GM10248 (cell line): ENCODE measurements at regions of chr18 and their contacts with region 1.

Region 1: DNA sequence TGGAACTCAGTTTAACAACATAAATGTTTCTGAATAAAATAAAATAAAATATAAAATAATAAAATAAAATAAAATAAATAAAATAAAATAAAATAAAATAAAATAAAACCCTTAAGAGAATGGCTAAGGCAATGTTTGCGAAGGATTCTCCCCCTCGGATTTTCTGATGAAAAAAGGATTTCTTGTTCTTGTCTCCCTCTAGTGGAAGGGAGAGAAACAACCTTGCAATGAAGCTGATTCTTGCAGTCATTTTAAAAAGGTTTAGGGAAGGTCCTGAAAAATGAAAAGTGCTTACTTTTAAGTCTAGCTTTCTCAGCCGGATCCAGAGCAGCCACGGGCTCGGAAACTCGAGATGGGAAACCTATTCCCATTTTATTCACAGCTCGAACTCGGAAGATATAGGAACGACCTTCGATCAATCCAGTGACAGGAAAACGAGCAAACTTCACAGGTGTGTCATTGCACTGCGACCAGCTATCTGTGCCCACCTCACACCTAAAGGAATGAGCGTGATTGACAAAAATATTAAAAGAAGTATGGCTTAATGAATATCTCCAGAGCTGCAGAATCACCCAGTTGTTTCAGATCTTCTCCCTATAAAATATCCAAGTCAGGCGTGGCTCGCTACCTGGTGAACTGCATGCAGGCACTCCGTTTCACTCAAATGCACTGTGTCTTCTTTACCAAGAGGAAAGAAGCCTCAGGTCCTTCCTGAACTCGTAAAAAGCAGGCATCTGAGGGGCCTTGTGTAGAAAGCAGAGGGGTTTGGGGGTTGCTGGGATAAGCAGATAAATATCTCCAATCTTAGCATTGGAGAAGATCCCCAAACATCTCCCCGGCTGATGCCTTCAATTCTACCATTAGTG is 68.1 kb downstream of the MYOM1 start:
- DNase-seq: peak; percentile 65
- CTCF ChIP-seq: peak; percentile 71

Region 2: DNA sequence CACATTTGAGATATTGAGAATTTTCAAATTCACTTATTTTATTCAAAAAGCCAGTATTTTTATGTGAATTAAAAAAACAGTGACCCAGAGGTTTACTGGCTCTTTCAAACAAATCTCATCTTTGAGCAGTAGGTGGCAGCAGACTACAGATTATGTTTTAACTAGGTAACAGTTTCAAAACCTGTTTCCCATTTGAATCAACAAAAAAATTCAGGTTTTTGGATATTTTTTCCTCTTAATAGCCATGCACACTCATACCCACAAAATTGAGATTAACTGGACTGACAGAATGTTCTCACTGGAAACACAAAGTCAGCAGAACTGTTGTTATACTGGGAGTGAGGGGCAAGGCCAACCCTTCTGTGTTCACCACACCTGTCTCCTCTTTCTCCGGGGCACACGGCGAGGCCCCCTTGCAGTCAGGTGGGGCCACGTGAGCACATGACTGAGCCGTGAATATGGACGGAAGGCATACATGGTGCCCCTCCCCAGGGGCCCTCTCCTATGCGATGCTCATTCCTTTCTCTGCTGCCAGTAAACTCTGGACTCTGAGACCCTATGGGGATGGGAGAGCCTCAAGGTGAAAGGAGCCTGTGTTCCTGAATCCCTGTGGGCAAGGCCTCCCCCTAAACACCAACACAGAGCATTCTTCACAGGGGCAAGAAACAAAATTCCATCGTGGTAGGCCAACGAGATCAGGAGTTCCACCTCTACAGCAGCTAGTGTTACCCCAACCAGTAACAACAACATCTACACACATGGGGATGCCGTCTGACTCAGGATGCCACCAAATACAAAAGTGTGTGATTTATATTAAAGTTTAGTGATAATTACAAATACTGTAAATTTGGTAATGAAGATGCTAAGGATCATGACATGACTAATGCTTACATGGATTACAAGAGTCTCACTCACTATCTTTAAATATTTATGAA is 219.1 kb before region 1 on chr18:
- CTCF ChIA-PET with region 1: interaction called, 20 read pairs
- POLR2A ChIA-PET with region 1: no interaction called
- DNase-seq: peak; percentile 74
- CTCF ChIP-seq: peak; percentile 54

Region 3: DNA sequence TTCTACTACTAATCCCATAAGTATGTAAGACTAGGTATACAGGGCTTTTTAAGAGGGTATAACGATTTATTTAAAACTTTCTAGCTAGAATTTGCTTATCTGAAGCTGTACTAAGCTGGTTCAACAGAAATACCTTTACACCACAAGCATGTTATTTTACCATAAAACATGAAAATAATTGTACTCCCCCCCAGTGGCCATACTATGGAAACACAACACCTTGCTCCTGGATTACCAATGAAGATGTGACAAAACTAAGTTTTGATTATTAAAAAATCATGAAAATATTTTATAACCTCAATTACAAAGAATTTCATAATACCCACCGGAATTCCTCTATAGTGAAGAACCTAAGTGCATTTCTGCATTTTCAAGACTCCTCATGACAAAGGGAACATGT is 166.0 kb before region 1 on chr18:
- CTCF ChIA-PET with region 1: interaction called, 11 read pairs
- POLR2A ChIA-PET with region 1: no interaction called
- DNase-seq: peak; percentile 44
- CTCF ChIP-seq: peak; percentile 51

Region 4: GRCh38 chr18:3055818-3056217 is 95.8 kb before region 1 on chr18:
- CTCF ChIA-PET with region 1: interaction called, 11 read pairs
- POLR2A ChIA-PET with region 1: no interaction called
- DNase-seq: no peak
- CTCF ChIP-seq: no peak

Region 5: DNA sequence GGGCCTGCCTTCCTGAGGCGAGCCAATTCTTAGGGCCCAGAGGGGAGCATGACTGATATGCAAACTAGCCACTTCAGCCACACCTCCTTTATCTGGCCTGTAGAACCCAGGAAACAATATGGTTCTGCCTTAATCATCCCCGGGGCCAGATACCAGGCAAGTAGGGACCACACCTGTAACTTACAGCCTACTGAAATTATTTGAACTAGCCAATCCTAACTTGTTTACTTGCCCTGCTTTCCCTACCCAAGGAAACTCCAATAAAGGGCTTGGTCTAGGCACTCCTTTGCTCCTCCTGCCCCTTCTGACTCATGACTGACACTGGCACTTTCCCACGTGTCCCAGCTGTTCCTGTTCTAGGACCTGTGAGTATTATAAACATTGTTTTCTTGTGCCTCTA is 10.5 kb after region 1 on chr18:
- CTCF ChIA-PET with region 1: interaction called, 18 read pairs
- POLR2A ChIA-PET with region 1: no interaction called
- DNase-seq: no peak
- CTCF ChIP-seq: no peak

Region 6: GRCh38 chr18:3177902-3178687 is 26.5 kb after region 1 on chr18:
- CTCF ChIA-PET with region 1: interaction called, 23 read pairs
- POLR2A ChIA-PET with region 1: interaction called, 3 read pairs
- DNase-seq: peak; percentile 82
- CTCF ChIP-seq: no peak